ENCODE measurements at regions of chr12 and their contacts with region 1.

Region 1: GRCh38 chr12:69070319-69071090 is 137.5 kb upstream of the CPM start:
- DNase-seq: peak; percentile 70
- H3K4me3 Mint-ChIP-seq: no peak overlapping the region
- H3K27ac Mint-ChIP-seq: no peak overlapping the region
- H3K4me1 Mint-ChIP-seq: peaks cover 2% of the 10 kb centered on the region
- H3K27me3 Mint-ChIP-seq: peaks cover 4% of the 10 kb centered on the region

Region 2: GRCh38 chr12:68871921-68872320 is 198.6 kb before region 1 on chr12:
- CTCF ChIA-PET with region 1: interaction called, 39 read pairs
- DNase-seq: peak; percentile 37
- H3K4me3 Mint-ChIP-seq: no peak overlapping the region
- H3K27ac Mint-ChIP-seq: no peak overlapping the region
- H3K4me1 Mint-ChIP-seq: peaks cover 4% of the 10 kb centered on the region
- H3K27me3 Mint-ChIP-seq: peaks cover 6% of the 10 kb centered on the region

Region 3: DNA sequence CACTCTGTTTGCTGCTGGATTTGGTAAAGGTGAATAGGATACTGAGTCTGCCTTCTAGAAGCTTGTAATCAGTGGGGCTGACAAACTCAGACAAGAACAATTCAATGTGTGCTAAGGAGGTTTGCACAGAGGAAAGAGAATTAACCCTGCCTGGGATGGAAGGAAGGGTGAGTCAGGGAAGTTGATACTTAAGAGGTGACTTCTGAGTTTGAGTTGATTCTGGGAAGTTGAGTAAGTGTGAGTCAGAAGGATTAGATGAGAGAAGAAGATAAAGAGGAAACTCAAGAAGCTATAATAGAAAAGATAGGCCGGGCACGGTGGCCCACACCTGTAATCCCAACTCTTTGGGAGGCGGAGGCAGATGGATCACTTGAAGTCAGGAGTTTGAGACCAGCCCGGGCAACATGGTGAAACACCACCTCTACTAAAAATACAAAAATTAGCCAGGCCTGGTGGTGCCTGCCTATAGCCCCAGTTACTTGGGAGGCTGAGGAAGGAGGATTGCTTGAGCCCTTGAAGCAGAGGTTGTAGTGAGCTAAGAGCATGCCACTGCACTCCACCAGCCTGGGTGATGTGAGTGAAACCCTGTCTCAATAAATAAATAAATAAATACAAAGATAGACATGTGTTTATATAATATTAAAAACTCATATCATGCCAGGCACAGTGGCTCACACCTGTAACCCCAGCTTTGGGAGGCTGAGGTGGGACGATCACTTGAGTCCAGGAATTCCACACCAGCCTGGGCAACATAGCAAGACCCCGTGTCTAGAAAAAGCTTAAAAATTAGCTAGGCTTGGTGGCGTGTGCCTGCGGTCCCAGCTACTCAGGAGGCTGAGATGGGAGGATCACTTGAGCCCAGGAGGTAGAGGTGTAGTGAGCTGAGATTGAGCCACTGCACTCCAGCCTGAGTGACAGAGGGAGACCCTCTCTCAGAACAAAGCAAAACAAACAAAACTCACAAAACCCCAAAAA is 10.7 kb before region 1 on chr12:
- CTCF ChIA-PET with region 1: interaction called, 13 read pairs
- DNase-seq: no peak
- H3K4me3 Mint-ChIP-seq: no peak overlapping the region
- H3K27ac Mint-ChIP-seq: no peak overlapping the region
- H3K4me1 Mint-ChIP-seq: peaks cover 11% of the 10 kb centered on the region
- H3K27me3 Mint-ChIP-seq: no peaks in the 10 kb centered on the region